WTC11 (cell line): ENCODE measurements at regions of chr1 and their contacts with region 1.

Region 1: DNA sequence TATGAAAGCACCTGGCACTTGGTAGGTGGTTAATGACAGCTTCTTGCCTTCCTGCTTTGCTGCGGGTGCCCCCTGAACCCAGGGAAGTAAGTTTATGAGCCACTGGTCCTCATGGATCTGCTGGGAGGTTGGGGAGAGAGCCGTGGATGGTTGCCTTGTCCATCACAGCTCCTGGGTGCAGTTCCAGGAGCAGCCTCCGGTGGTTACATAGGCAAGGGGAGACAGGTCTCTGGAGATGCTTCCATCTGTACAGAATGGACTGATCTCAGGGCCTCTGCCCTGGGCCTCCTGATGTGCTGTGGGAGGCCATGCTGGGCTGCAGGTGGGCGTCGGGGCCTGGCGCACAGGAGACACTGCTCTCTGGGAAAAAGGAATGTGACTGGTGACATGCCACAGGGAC is 31.6 kb upstream of the ARHGEF10L start:
- DNase-seq: peak; percentile 45
- ATAC-seq: peak; percentile 79
- H3K4me3 Mint-ChIP-seq: no peak overlapping the region
- H3K27ac Mint-ChIP-seq: no peak overlapping the region
- H3K4me1 Mint-ChIP-seq: 0 out of 2 replicates have a peak, but pooled peaks cover 1% of the 10 kb centered on the region
- H3K27me3 Mint-ChIP-seq: 0 out of 2 replicates have a peak, but pooled peaks cover 2% of the 10 kb centered on the region
- CTCF ChIP-seq: no peak

Region 2: GRCh38 chr1:17405898-17406759 is 101.8 kb before region 1 on chr1:
- CTCF ChIA-PET with region 1: no interaction called
- POLR2A ChIA-PET with region 1: no interaction called
- DNase-seq: peak; percentile 89
- ATAC-seq: peak; percentile 82
- H3K4me3 Mint-ChIP-seq: no peak overlapping the region
- H3K27ac Mint-ChIP-seq: peak overlapping the region; percentile 78; the same call in 1 of the 2 replicates
- H3K4me1 Mint-ChIP-seq: peaks cover 49% of the 10 kb centered on the region
- H3K27me3 Mint-ChIP-seq: no peaks in the 10 kb centered on the region
- CTCF ChIP-seq: peak; percentile 75

Region 3: GRCh38 chr1:17520071-17520813 is 12.3 kb after region 1 on chr1:
- CTCF ChIA-PET with region 1: interaction called, 19 read pairs
- POLR2A ChIA-PET with region 1: no interaction called
- DNase-seq: no peak
- ATAC-seq: no peak; the same call in 1 of the 2 replicates
- H3K4me3 Mint-ChIP-seq: no peak overlapping the region
- H3K27ac Mint-ChIP-seq: peak overlapping the region; percentile 19; the same call in 1 of the 2 replicates
- H3K4me1 Mint-ChIP-seq: peaks cover 51% of the 10 kb centered on the region
- H3K27me3 Mint-ChIP-seq: no peaks in the 10 kb centered on the region
- CTCF ChIP-seq: no peak

Region 4: GRCh38 chr1:17569200-17570161 is 61.6 kb after region 1 on chr1:
- CTCF ChIA-PET with region 1: interaction called, 114 read pairs
- POLR2A ChIA-PET with region 1: interaction called, 4 read pairs
- DNase-seq: no peak
- ATAC-seq: no peak
- H3K4me3 Mint-ChIP-seq: no peak overlapping the region
- H3K27ac Mint-ChIP-seq: peak overlapping the region; percentile 89
- H3K4me1 Mint-ChIP-seq: peaks cover 88% of the 10 kb centered on the region
- H3K27me3 Mint-ChIP-seq: no peaks in the 10 kb centered on the region
- CTCF ChIP-seq: no peak

Region 5: DNA sequence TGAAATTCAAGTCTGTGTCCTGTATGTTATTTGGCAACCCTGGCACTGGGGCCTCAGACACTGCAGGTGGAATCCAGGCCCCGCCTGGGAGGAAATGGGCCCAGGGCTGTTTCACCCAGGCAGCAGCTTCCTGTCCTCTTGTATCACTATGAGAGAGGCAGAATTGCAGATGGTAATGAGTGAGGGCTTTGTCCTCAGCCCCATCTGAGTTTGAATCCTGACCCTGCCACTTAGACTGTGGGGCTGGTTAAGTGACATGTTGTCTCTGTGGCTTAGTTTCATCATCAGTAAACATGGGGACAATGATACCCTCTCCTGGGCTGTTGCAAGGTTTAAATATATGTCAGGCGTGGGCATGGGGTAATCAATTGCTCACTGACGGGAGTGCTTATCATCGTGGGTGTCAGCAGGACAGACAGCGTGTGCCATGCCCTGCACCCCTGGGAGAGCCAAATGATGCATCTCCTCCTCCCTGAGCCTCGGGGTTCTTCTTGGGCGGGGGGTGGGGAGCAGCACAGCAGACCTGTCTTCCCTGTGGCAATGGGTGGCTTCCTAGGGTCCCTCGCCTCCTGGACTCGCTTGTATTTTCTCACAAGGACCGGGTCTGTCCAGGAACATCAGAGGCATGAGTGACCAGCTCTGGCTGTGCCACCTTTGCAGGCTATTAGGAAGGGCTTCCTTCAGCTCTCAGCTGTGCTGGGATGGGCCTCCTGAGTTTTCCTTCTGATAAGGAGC is 73.6 kb after region 1 on chr1:
- CTCF ChIA-PET with region 1: interaction called, 114 read pairs
- POLR2A ChIA-PET with region 1: interaction called, 3 read pairs
- DNase-seq: no peak
- ATAC-seq: peak; percentile 66
- H3K4me3 Mint-ChIP-seq: no peak overlapping the region
- H3K27ac Mint-ChIP-seq: peak overlapping the region; percentile 43
- H3K4me1 Mint-ChIP-seq: peaks cover 63% of the 10 kb centered on the region
- H3K27me3 Mint-ChIP-seq: no peaks in the 10 kb centered on the region
- CTCF ChIP-seq: no peak